HCT116 (cell line): ENCODE measurements at regions of chr18 and their contacts with region 1.

Region 1: GRCh38 chr18:63578357-63578958 is 8.7 kb upstream of the SERPINB13 start:
- DNase-seq: peak; percentile 41
- ATAC-seq: peak; percentile 90
- H3K4me3 ChIP-seq: no peak overlapping the region
- H3K27ac ChIP-seq: no peak overlapping the region
- H3K4me1 ChIP-seq: no peaks in the 10 kb centered on the region
- H3K27me3 ChIP-seq: no peaks in the 10 kb centered on the region
- CTCF ChIP-seq: peak; percentile 70 to 82 (median 81); a peak in 5 of 6 replicates
- POLR2A ChIP-seq: no peak
- RAD21 ChIP-seq: peak; percentile 84

Region 2: DNA sequence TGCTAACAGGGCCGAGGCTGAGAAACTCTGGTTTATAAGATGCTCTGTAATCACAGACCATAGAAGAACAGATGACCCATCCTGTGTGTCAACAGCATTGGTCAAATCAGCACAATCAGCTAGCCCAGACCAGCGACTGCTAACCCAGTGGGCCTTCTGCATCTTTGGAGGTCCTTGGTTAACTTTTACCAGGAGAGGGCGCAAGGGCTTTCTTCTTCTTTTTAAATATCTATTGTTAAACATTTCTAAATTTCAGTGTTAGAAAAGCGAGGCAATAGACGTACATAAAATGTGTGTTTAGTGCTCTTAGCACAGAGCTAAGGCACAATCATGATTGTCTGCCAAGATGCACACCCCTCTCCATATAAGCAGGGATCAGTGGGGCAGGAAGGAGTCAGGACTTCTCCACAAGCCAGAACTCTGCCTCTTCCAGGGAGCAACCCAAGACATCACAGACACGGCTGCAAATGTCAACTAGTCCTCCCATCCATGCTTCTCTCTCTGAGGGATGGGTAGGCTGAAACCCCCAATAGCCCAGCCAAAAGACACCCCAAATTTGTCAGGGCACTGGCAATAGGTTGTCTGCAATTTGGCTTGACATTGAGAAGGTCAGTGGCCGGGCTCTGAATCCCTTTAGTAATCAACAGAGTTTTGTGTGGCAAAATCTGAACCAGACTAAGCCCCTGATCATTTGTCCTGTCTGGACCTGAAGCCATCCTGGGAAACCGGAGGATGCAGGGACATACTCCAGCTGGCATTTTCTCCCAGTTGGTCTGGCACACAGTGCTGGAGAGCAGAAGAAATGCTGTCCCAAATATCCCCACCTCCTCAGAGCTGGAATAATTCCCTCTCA is 447.1 kb before region 1 on chr18:
- CTCF ChIA-PET with region 1: no interaction called
- POLR2A ChIA-PET with region 1: no interaction called
- RAD21 ChIA-PET with region 1: no interaction called
- intact Hi-C with region 1: loop called (anchors 10 kb)
- DNase-seq: no peak
- ATAC-seq: peak; percentile 77
- H3K4me3 ChIP-seq: no peak overlapping the region
- H3K27ac ChIP-seq: no peak overlapping the region
- H3K4me1 ChIP-seq: no peaks in the 10 kb centered on the region
- H3K27me3 ChIP-seq: peaks cover 4% of the 10 kb centered on the region; the same call in 1 of the 2 replicates
- CTCF ChIP-seq: peak; percentile 42 to 62 (median 52)
- POLR2A ChIP-seq: no peak
- RAD21 ChIP-seq: peak; percentile 65

Region 3: DNA sequence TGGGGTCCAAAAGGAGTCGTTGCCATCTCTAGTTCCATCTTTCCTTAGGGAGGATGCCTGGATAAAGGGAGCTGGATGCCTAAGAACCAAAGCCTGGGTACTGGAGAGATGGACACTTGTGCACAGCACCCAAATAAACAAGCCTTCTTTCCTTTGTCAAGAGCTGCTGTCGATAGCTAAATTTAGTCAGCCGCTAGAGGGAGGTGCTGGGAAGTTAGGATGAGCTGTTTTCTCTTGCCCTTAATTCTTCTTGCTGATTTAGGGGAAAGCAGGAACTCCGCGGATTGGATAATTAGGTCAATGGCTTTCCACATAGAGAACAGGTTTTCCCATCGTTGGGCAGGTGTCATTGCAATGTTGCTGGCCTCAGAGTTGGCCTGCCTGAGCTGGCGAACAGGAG is 67.2 kb before region 1 on chr18:
- CTCF ChIA-PET with region 1: interaction called, 104 read pairs
- POLR2A ChIA-PET with region 1: no interaction called
- RAD21 ChIA-PET with region 1: no interaction called
- intact Hi-C with region 1: no loop called
- DNase-seq: peak; percentile 82
- ATAC-seq: peak; percentile 92
- H3K4me3 ChIP-seq: no peak overlapping the region
- H3K27ac ChIP-seq: no peak overlapping the region
- H3K4me1 ChIP-seq: no peaks in the 10 kb centered on the region
- H3K27me3 ChIP-seq: no peaks in the 10 kb centered on the region
- CTCF ChIP-seq: peak; percentile 55 to 85 (median 78); a peak in 5 of 6 replicates
- POLR2A ChIP-seq: no peak
- RAD21 ChIP-seq: peak; percentile 58

Region 4: GRCh38 chr18:63523660-63524059 is 54.8 kb before region 1 on chr18:
- CTCF ChIA-PET with region 1: interaction called, 104 read pairs
- POLR2A ChIA-PET with region 1: no interaction called
- RAD21 ChIA-PET with region 1: interaction called, 5 to 6 read pairs
- intact Hi-C with region 1: loop called (anchors 1 kb)
- DNase-seq: no peak
- ATAC-seq: no peak
- H3K4me3 ChIP-seq: no peak overlapping the region
- H3K27ac ChIP-seq: no peak overlapping the region
- H3K4me1 ChIP-seq: no peaks in the 10 kb centered on the region
- H3K27me3 ChIP-seq: no peaks in the 10 kb centered on the region
- CTCF ChIP-seq: 0 out of 6 replicates have a peak, but pooled peaks of 2 of the 3 experiments have one; percentile 10 to 21
- POLR2A ChIP-seq: no peak
- RAD21 ChIP-seq: peak; percentile 32; the same call in 1 of the 2 replicates

Region 5: DNA sequence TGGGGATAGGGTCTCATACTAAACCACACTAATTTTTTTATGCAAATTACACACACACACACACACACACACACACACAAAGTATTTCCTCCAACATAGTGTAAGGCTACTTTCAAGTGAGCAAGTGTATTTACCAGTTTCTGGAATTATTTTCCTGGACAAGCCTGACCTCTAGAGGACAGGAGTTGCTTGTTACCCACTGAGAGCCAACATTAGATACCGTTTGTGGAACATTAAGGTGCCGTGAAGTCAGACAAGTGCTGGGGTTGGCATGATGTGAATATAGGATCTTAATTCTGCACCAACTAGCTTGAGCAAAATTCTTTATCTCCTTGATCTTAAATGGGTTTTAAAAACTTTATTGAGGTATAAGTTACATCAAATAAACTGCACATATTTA is 269.7 kb after region 1 on chr18:
- CTCF ChIA-PET with region 1: interaction called, 6 read pairs
- POLR2A ChIA-PET with region 1: no interaction called
- RAD21 ChIA-PET with region 1: no interaction called
- intact Hi-C with region 1: loop called (anchors 2 kb)
- DNase-seq: peak; percentile 66
- ATAC-seq: peak; percentile 76
- H3K4me3 ChIP-seq: no peak overlapping the region
- H3K27ac ChIP-seq: no peak overlapping the region
- H3K4me1 ChIP-seq: no peaks in the 10 kb centered on the region
- H3K27me3 ChIP-seq: no peaks in the 10 kb centered on the region
- CTCF ChIP-seq: peak; percentile 56 to 81 (median 70); a peak in 5 of 6 replicates
- POLR2A ChIP-seq: no peak
- RAD21 ChIP-seq: peak; percentile 74